T-cell (primary cell): ENCODE measurements at regions of chr5 and their contacts with region 1.

Region 1: GRCh38 chr5:76544268-76544926 is 78.8 kb downstream of the F2RL2 start:
- DNase-seq: peak; percentile 30 to 77 (median 54)
- ATAC-seq: peak; percentile 21 to 31 (median 28)
- H3K4me3 ChIP-seq: no peak overlapping the region
- H3K4me3 Mint-ChIP-seq: peak overlapping the region; percentile 67 to 76 (median 75)
- H3K27ac ChIP-seq: peak overlapping the region; percentile 96
- H3K27ac Mint-ChIP-seq: peak overlapping the region; percentile 96 to 99
- H3K4me1 ChIP-seq: peaks cover 29 to 66% of the 10 kb centered on the region in 2 experiments
- H3K4me1 Mint-ChIP-seq: peaks cover 83 to 95% (median 93%) of the 10 kb centered on the region in 3 donors
- H3K27me3 ChIP-seq: no peaks in the 10 kb centered on the region
- H3K27me3 Mint-ChIP-seq: no peaks in the 10 kb centered on the region

Region 2: GRCh38 chr5:76473661-76474060 is 70.7 kb before region 1 on chr5:
- CTCF ChIA-PET with region 1: interaction called in 1 of 2 experiments, 16 read pairs
- POLR2A ChIA-PET with region 1: interaction called in 1 of 2 experiments, 11 read pairs
- DNase-seq: peak; percentile 29 to 86 (median 75)
- ATAC-seq: peak; percentile 86 to 99 (median 98)
- H3K4me3 ChIP-seq: no peak overlapping the region
- H3K4me3 Mint-ChIP-seq: peak overlapping the region; percentile 11 to 66 (median 15)
- H3K27ac ChIP-seq: peak overlapping the region; percentile 70
- H3K27ac Mint-ChIP-seq: peak overlapping the region; percentile 96 to 97
- H3K4me1 ChIP-seq: peaks cover 32 to 47% of the 10 kb centered on the region in 2 experiments
- H3K4me1 Mint-ChIP-seq: peaks cover 72 to 85% (median 85%) of the 10 kb centered on the region in 3 donors
- H3K27me3 ChIP-seq: no peaks in the 10 kb centered on the region
- H3K27me3 Mint-ChIP-seq: no peaks in the 10 kb centered on the region

Region 3: GRCh38 chr5:76493190-76493837 is 51.1 kb before region 1 on chr5:
- CTCF ChIA-PET with region 1: no interaction called
- POLR2A ChIA-PET with region 1: interaction called in 1 of 2 experiments, 13 read pairs
- DNase-seq: no peak
- ATAC-seq: no peak
- H3K4me3 ChIP-seq: no peak overlapping the region
- H3K4me3 Mint-ChIP-seq: no peak overlapping the region
- H3K27ac ChIP-seq: no peak overlapping the region
- H3K27ac Mint-ChIP-seq: no peak overlapping the region
- H3K4me1 ChIP-seq: peaks cover 2 to 4% of the 10 kb centered on the region in 2 experiments
- H3K4me1 Mint-ChIP-seq: peaks cover 74 to 87% (median 80%) of the 10 kb centered on the region in 3 donors
- H3K27me3 ChIP-seq: no peaks in the 10 kb centered on the region
- H3K27me3 Mint-ChIP-seq: no peaks in the 10 kb centered on the region

Region 4: GRCh38 chr5:76582230-76583162 is 38.1 kb after region 1 on chr5:
- CTCF ChIA-PET with region 1: interaction called, 17 to 26 read pairs
- POLR2A ChIA-PET with region 1: interaction called in 1 of 2 experiments, 6 read pairs
- DNase-seq: no peak
- ATAC-seq: no peak
- H3K4me3 ChIP-seq: no peak overlapping the region
- H3K4me3 Mint-ChIP-seq: no peak overlapping the region
- H3K27ac ChIP-seq: no peak overlapping the region
- H3K27ac Mint-ChIP-seq: peak overlapping the region in 1 of 2 donors; percentile 53
- H3K4me1 ChIP-seq: peaks cover 0 to 2% of the 10 kb centered on the region in 2 experiments
- H3K4me1 Mint-ChIP-seq: peaks cover 0 to 31% (median 27%) of the 10 kb centered on the region in 3 donors
- H3K27me3 ChIP-seq: no peaks in the 10 kb centered on the region
- H3K27me3 Mint-ChIP-seq: no peaks in the 10 kb centered on the region

Region 5: DNA sequence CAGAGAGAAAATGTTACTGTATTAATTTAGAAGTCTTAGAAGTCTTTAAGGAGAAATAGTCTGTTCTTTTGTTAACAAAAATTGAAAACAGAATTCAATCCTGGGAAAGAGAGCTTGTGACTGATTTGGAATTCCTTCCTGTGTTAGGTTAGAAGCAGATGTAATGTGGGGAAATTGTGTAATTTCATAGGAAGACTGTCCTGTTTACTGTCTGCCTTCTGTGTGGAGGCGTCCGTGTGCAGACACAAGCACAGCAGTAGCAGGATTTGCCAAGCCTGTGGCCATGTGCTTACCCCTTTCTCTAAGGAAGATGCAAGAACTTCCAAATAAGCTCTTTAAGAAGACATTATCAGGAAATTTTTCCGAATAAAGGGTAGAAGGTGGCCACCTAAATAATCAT is 134.8 kb after region 1 on chr5:
- CTCF ChIA-PET with region 1: no interaction called
- POLR2A ChIA-PET with region 1: no interaction called
- DNase-seq: no peak
- ATAC-seq: no peak
- H3K4me3 ChIP-seq: no peak overlapping the region
- H3K4me3 Mint-ChIP-seq: no peak overlapping the region
- H3K27ac ChIP-seq: no peak overlapping the region
- H3K27ac Mint-ChIP-seq: no peak overlapping the region
- H3K4me1 ChIP-seq: no peaks in the 10 kb centered on the region
- H3K4me1 Mint-ChIP-seq: peaks cover 0 to 4% (median 0%) of the 10 kb centered on the region in 3 donors
- H3K27me3 ChIP-seq: no peaks in the 10 kb centered on the region
- H3K27me3 Mint-ChIP-seq: no peaks in the 10 kb centered on the region